ENCODE measurements at regions of chr14 and their contacts with region 1.

Region 1: GRCh38 chr14:20970983-20971704 is 15.9 kb downstream of the RNASE2 start:
- DNase-seq: no peak
- H3K4me3 ChIP-seq: peak overlapping the region; percentile 73
- CTCF ChIP-seq: peak; percentile 98

Region 2: GRCh38 chr14:20682435-20683124 is 288.6 kb before region 1 on chr14:
- CTCF ChIA-PET with region 1: interaction called, 15 read pairs
- POLR2A ChIA-PET with region 1: no interaction called
- DNase-seq: no peak
- H3K4me3 ChIP-seq: peak overlapping the region; percentile 96
- CTCF ChIP-seq: no peak

Region 3: GRCh38 chr14:20697273-20698017 is 273.7 kb before region 1 on chr14:
- CTCF ChIA-PET with region 1: interaction called, 54 read pairs
- POLR2A ChIA-PET with region 1: no interaction called
- DNase-seq: no peak
- H3K4me3 ChIP-seq: no peak overlapping the region
- CTCF ChIP-seq: peak; percentile 81

Region 4: GRCh38 chr14:20855652-20856291 is 115.4 kb before region 1 on chr14:
- CTCF ChIA-PET with region 1: interaction called, 72 read pairs
- POLR2A ChIA-PET with region 1: no interaction called
- DNase-seq: no peak
- H3K4me3 ChIP-seq: no peak overlapping the region
- CTCF ChIP-seq: peak; percentile 40

Region 5: DNA sequence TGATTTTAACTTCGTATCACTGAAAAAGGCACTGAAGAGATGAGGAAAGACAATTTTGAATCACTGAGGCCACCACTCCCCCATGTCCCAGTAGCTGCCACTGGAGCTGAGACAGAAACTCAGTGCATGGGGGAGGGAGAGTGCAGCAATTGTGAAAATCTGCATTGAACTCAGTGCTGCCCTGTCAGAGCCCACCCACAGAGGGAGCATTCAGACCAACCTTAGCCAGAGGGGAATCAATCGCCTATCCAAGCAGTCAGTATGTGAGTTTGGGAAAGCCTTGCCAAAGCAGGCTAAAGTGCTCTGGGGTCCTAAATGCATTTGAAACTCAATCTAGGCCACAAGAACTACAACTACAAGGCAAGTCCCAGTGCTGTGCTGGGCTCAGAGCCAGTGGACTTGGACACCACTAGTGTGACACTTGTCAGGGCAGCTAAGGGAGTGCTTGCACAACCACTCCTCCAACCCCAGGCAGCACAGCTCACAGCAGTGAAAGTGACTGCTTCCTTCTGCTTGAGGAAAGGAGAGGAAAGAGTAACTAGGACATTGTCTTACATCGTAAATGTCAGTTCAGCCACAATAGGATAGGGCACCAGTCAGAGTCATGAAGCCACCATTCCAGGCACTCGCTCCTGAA is 66.6 kb before region 1 on chr14:
- CTCF ChIA-PET with region 1: no interaction called
- POLR2A ChIA-PET with region 1: no interaction called
- DNase-seq: no peak
- H3K4me3 ChIP-seq: no peak overlapping the region
- CTCF ChIP-seq: no peak

Region 6: GRCh38 chr14:20989572-20990551 is 18.7 kb after region 1 on chr14 and contains the start of gene METTL17:
- CTCF ChIA-PET with region 1: interaction called, 202 read pairs
- POLR2A ChIA-PET with region 1: no interaction called
- DNase-seq: peak; percentile 91
- H3K4me3 ChIP-seq: peak within 1 kb of the TSS; percentile 87
- CTCF ChIP-seq: peak; percentile 45

Region 7: DNA sequence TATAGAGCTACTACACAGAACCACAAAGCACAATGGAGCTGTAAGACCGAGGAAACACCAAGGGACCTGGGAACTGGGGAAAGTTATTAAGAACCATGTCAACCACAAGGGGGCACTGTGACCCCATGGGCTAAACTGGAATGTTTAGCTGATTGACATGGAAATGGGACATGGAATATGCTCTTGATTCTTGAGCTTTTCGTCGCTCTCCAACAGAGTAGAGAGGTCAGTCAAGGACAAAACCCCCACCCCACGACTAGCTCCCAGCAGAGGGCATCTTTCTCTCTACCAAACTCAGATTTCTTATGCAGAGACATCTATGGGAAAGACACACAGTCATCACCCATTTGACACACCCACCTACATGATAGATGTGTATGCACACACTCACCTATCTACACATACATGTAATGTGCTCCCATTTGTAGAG is 43.6 kb after region 1 on chr14:
- CTCF ChIA-PET with region 1: interaction called, 22 read pairs
- POLR2A ChIA-PET with region 1: no interaction called
- DNase-seq: peak; percentile 23
- H3K4me3 ChIP-seq: no peak overlapping the region
- CTCF ChIP-seq: peak; percentile 82

Region 8: GRCh38 chr14:21121106-21121505 is 150.0 kb after region 1 on chr14:
- CTCF ChIA-PET with region 1: no interaction called
- POLR2A ChIA-PET with region 1: no interaction called
- DNase-seq: no peak
- H3K4me3 ChIP-seq: no peak overlapping the region
- CTCF ChIP-seq: no peak

Region 9: GRCh38 chr14:21215130-21215878 is 244.2 kb after region 1 on chr14:
- CTCF ChIA-PET with region 1: no interaction called
- POLR2A ChIA-PET with region 1: no interaction called
- DNase-seq: no peak
- H3K4me3 ChIP-seq: no peak overlapping the region
- CTCF ChIP-seq: no peak

Measured in AG04449 (cell line).